Pancreas (tissue), 10 donors: ENCODE measurements at regions of chr14 and their contacts with region 1.

Region 1: DNA sequence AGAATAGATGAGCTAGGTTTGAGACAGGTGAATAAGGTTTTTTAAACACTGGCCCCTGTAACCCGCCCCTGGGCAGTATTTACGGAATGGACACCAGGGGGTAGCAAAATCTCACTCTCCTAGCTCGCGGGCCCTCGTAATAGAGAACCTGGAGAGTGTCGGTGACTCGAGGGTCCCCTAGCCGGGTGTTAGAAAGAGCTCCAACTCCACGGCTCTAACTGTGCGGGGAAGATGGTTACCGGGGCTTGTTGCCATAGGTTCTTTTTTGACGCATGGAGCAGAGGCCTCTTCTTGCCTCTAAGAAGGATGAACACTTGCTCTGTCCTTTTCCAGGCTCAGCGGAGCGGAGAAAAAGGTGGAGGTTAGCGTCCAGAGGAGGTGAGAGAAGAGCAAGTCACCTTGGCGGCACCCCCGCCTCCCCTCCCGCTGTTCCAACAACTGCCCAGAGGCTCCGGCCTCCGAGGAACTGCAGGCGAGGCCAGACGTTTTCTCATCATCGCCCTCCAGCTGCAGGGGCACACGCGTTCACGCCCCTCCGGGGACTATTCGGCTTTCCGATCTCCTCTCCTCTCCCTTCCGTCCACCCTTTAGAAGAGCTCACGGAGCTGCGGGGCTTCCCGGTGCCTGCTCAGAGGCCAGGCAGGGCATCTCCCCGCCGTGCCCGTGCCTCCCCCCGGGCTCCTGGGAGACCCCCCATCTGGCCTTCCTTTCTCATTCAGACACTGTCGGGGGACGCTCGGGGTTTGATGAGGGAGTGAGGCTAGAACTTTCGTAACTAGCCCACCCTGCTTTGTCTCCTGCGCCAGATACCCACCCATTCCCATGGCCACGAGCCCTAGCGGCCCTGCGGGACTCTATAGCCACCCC is 1.4 kb upstream of the ARHGEF40 start:
- DNase-seq: peak in 4 of 6 donors; percentile 52 to 65 (median 58)
- ATAC-seq: peak; percentile 28 to 62 (median 54)
- H3K4me3 ChIP-seq: peak overlapping the region; percentile 47 to 77 (median 70)
- H3K27ac ChIP-seq: peak overlapping the region; percentile 70 to 88 (median 78)
- H3K4me1 ChIP-seq: peaks cover 0 to 9% (median 5%) of the 10 kb centered on the region in 3 donors
- H3K27me3 ChIP-seq: no peaks in the 10 kb centered on the region
- CTCF ChIP-seq: peak in 3 of 4 donors; percentile 21 to 43 (median 38)

Region 2: GRCh38 chr14:21103710-21104447 is 35.1 kb after region 1 on chr14:
- intact Hi-C with region 1: loop called in 1 of 3 experiments (anchors 5 kb)
- DNase-seq: peak; percentile 93 to 97 (median 96)
- ATAC-seq: peak; percentile 91 to 96 (median 94)
- H3K4me3 ChIP-seq: peak overlapping the region; percentile 49 to 67 (median 56)
- H3K27ac ChIP-seq: peak overlapping the region; percentile 98 to 100 (median 98)
- H3K4me1 ChIP-seq: peaks cover 18 to 42% (median 20%) of the 10 kb centered on the region in 3 donors
- H3K27me3 ChIP-seq: no peaks in the 10 kb centered on the region
- CTCF ChIP-seq: peak; percentile 57 to 85 (median 70)